Activated CD4-positive, alpha-beta memory T cell treated with anti-CD3 and anti-CD28 coated beads for 36 hours (primary cell): ENCODE measurements at regions of chr7 and their contacts with region 1.

Region 1: DNA sequence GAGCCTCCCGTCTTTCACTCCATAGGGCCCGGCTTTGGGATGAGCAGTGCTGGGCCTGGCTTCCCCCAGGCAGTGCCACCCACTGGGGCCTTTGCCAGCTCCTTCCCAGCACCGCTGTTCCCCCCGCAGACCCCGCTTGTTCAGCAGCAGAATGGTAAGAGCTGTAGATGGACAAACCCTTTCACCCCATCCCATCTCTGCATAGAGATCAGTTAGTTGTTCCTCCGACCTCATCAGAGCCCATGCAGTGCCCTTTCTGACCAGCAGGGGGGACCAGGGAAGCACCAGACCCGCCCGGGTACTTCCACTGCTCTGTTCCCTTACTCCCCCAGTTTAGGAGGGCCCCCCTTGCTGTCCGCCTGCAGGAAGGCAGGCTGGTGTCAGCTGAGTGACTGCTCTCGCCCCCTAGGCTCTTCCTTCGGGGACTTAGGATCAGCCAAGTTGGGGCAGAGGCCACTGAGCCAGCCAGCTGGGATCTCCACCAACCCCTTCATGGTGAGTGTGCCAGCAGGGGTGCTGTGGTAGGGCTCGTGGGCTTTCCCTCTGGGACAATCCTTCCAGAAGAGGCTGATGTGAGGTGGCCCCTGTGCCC is 9.8 kb downstream of the SAP25 start:
- DNase-seq: peak; percentile 86
- H3K4me3 Mint-ChIP-seq: no peak overlapping the region
- H3K27ac Mint-ChIP-seq: no peak overlapping the region
- H3K4me1 Mint-ChIP-seq: peaks cover 18% of the 10 kb centered on the region
- H3K27me3 Mint-ChIP-seq: no peaks in the 10 kb centered on the region

Region 2: GRCh38 chr7:99918959-99919813 is 644.7 kb before region 1 on chr7 and contains the start of gene TRIM4:
- CTCF ChIA-PET with region 1: no interaction called
- POLR2A ChIA-PET with region 1: no interaction called
- intact Hi-C with region 1: no loop called
- DNase-seq: peak; percentile 96
- H3K4me3 Mint-ChIP-seq: peak within 1 kb of the TSS; percentile 98
- H3K27ac Mint-ChIP-seq: peak within 1 kb of the TSS; percentile 98
- H3K4me1 Mint-ChIP-seq: peaks cover 43% of the 10 kb centered on the region
- H3K27me3 Mint-ChIP-seq: no peaks in the 10 kb centered on the region
- total RNA-seq, gene TRIM4: 24.9 to 26.1 TPM

Region 3: GRCh38 chr7:100435401-100436304 is 128.3 kb before region 1 on chr7:
- CTCF ChIA-PET with region 1: no interaction called
- POLR2A ChIA-PET with region 1: no interaction called
- intact Hi-C with region 1: no loop called
- DNase-seq: peak; percentile 62
- H3K4me3 Mint-ChIP-seq: peak overlapping the region; percentile 91
- H3K27ac Mint-ChIP-seq: peak overlapping the region; percentile 96
- H3K4me1 Mint-ChIP-seq: peaks cover 44% of the 10 kb centered on the region
- H3K27me3 Mint-ChIP-seq: no peaks in the 10 kb centered on the region

Region 4: GRCh38 chr7:100469227-100470044 is 94.5 kb before region 1 on chr7:
- CTCF ChIA-PET with region 1: interaction called, 104 read pairs
- POLR2A ChIA-PET with region 1: no interaction called
- intact Hi-C with region 1: loop called (anchors 1 kb)
- DNase-seq: peak; percentile 88
- H3K4me3 Mint-ChIP-seq: no peak overlapping the region
- H3K27ac Mint-ChIP-seq: peak overlapping the region; percentile 45
- H3K4me1 Mint-ChIP-seq: peaks cover 27% of the 10 kb centered on the region
- H3K27me3 Mint-ChIP-seq: no peaks in the 10 kb centered on the region

Region 5: GRCh38 chr7:100538654-100539435 is 25.1 kb before region 1 on chr7 and contains the start of gene AGFG2:
- CTCF ChIA-PET with region 1: interaction called, 132 read pairs
- POLR2A ChIA-PET with region 1: no interaction called
- intact Hi-C with region 1: no loop called
- DNase-seq: peak; percentile 100
- H3K4me3 Mint-ChIP-seq: peak within 1 kb of the TSS; percentile 95
- H3K27ac Mint-ChIP-seq: peak within 1 kb of the TSS; percentile 90
- H3K4me1 Mint-ChIP-seq: peaks cover 41% of the 10 kb centered on the region
- H3K27me3 Mint-ChIP-seq: no peaks in the 10 kb centered on the region
- total RNA-seq, gene AGFG2: 60.9 to 62.5 TPM

Region 6: GRCh38 chr7:100726996-100727761 is 163.3 kb after region 1 on chr7:
- CTCF ChIA-PET with region 1: interaction called, 11 read pairs
- POLR2A ChIA-PET with region 1: no interaction called
- intact Hi-C with region 1: loop called (anchors 1 kb)
- DNase-seq: no peak
- H3K4me3 Mint-ChIP-seq: no peak overlapping the region
- H3K27ac Mint-ChIP-seq: no peak overlapping the region
- H3K4me1 Mint-ChIP-seq: peaks cover 2% of the 10 kb centered on the region
- H3K27me3 Mint-ChIP-seq: peaks cover 16% of the 10 kb centered on the region